Caco-2 (cell line): ENCODE measurements at regions of chr1 and their contacts with region 1.

Region 1: DNA sequence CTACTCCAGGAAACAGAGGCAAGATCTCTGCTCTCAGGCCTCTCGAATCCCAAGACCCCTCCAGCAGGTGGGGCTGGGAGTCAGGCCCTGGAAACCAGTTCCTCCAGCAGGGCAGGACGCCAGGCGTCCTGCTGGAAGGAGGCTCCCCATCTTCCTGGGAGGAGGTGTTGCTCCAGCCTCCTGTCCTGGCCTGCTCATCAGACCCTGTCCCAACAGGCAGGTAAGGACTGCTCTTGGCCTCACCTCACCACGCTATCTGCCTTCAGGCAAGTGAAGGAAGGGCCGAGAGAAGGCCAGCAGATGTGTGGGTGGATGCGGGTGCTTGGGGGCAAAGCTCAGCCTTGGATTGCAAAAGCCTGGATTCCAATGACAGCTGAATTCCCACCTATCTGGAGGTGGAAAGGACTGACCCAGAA is 82.9 kb downstream of the SSBP3 start:
- DNase-seq: peak; percentile 82 to 92
- H3K4me3 ChIP-seq: no peak overlapping the region
- H3K4me3 Mint-ChIP-seq: peak overlapping the region; percentile 22
- H3K27ac Mint-ChIP-seq: peak overlapping the region; percentile 60
- H3K4me1 ChIP-seq: peaks cover 17% of the 10 kb centered on the region
- H3K4me1 Mint-ChIP-seq: peaks cover 18% of the 10 kb centered on the region
- H3K27me3 ChIP-seq: no peaks in the 10 kb centered on the region
- H3K27me3 Mint-ChIP-seq: no peaks in the 10 kb centered on the region
- CTCF ChIP-seq: peak; percentile 24 to 50

Region 2: DNA sequence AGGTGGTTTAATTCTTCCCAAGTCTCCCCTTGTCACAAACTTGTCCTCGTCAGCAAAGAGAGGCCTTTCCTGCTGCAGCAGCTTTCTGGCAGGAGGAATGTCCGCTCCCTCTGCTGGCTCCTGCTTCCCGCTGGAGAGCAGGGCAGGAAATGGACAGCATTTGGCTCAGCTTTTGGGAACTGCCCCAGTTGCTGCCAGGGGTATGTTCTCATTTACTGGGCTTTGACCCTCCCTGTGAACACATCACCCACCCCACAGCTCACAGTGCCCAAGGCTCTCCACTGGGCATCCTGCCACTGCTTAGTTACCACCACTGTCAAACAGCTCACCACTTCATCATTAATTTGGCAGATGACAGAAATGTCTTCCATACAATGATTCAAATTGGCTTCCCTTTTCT is 48.0 kb before region 1 on chr1:
- CTCF ChIA-PET with region 1: no interaction called
- POLR2A ChIA-PET with region 1: no interaction called
- intact Hi-C with region 1: no loop called
- DNase-seq: no peak
- H3K4me3 ChIP-seq: no peak overlapping the region
- H3K4me3 Mint-ChIP-seq: no peak overlapping the region
- H3K27ac Mint-ChIP-seq: no peak overlapping the region
- H3K4me1 ChIP-seq: peaks cover 16% of the 10 kb centered on the region
- H3K4me1 Mint-ChIP-seq: peaks cover 11% of the 10 kb centered on the region
- H3K27me3 ChIP-seq: no peaks in the 10 kb centered on the region
- H3K27me3 Mint-ChIP-seq: no peaks in the 10 kb centered on the region
- CTCF ChIP-seq: no peak

Region 3: DNA sequence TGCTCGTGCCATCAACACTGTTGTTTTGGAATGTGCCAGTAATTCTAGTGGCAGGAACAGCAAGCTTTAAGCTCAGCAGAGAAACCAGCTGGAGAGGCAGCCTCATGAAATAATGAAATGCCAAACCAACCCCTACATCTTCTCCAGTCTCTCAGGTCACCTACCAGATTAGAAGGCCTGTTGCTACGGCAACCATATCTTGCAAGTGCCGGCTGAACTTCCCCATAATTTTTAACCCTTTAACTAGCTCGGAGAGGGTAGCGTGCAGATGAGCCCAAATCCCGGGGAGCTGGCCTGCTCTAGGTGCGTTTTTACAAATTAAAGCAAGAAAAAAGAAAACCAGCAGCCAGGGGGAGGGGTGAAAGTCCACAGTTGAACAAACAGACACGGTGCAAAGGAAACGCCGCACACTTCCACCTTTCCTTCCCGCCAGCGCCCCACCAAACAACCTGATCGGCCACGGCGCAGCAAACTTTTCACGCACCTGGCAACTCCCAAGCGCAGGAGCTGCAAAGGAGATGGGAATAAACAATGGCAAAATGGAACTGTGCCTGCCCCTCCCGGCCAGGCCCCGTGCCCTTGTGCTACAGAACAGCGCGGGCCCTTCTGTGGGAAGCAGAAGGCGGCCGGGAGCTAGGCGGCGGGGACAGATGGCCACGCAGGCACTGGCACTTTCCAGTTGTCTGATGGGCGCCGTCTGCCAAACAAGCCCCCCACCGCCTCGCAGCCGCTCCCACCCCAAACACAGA is 32.8 kb after region 1 on chr1:
- CTCF ChIA-PET with region 1: interaction called, 3 read pairs
- POLR2A ChIA-PET with region 1: no interaction called
- intact Hi-C with region 1: loop called (anchors 2 kb)
- DNase-seq: peak; percentile 50 to 69
- H3K4me3 ChIP-seq: peak overlapping the region; percentile 5; the same call in 1 of the 2 replicates
- H3K4me3 Mint-ChIP-seq: peak overlapping the region; percentile 57
- H3K27ac Mint-ChIP-seq: peak overlapping the region; percentile 90
- H3K4me1 ChIP-seq: peaks cover 38% of the 10 kb centered on the region
- H3K4me1 Mint-ChIP-seq: peaks cover 11% of the 10 kb centered on the region
- H3K27me3 ChIP-seq: no peaks in the 10 kb centered on the region
- H3K27me3 Mint-ChIP-seq: no peaks in the 10 kb centered on the region
- CTCF ChIP-seq: no peak

Region 4: GRCh38 chr1:54406339-54407153 is 83.2 kb after region 1 on chr1 and contains the start of gene SSBP3:
- CTCF ChIA-PET with region 1: no interaction called
- POLR2A ChIA-PET with region 1: no interaction called
- intact Hi-C with region 1: loop called (anchors 1 kb)
- DNase-seq: peak; percentile 87 to 95
- H3K4me3 ChIP-seq: peak within 1 kb of the TSS; percentile 59
- H3K4me3 Mint-ChIP-seq: peak within 1 kb of the TSS; percentile 79
- H3K27ac Mint-ChIP-seq: peak within 1 kb of the TSS; percentile 11
- H3K4me1 ChIP-seq: peaks cover 28% of the 10 kb centered on the region
- H3K4me1 Mint-ChIP-seq: peaks cover 38% of the 10 kb centered on the region
- H3K27me3 ChIP-seq: no peaks in the 10 kb centered on the region
- H3K27me3 Mint-ChIP-seq: no peaks in the 10 kb centered on the region
- CTCF ChIP-seq: no peak
- total RNA-seq, gene SSBP3: 40.6 and 42.1 TPM in 2 replicates